BJ (cell line): ENCODE measurements at regions of chr20 and their contacts with region 1.

Region 1: GRCh38 chr20:15236812-15237211 is 899.4 kb upstream of the FLRT3 start:
- DNase-seq: no peak
- H3K4me3 ChIP-seq: no peak overlapping the region
- H3K27me3 ChIP-seq: no peaks in the 10 kb centered on the region
- CTCF ChIP-seq: peak; percentile 67

Region 2: GRCh38 chr20:14337400-14338171 is 899.2 kb before region 1 on chr20 and contains the start of gene FLRT3:
- CTCF ChIA-PET with region 1: interaction called, 12 read pairs
- POLR2A ChIA-PET with region 1: no interaction called
- DNase-seq: peak; percentile 80
- H3K4me3 ChIP-seq: peak within 1 kb of the TSS; percentile 62
- H3K27me3 ChIP-seq: no peaks in the 10 kb centered on the region
- CTCF ChIP-seq: peak; percentile 81
- polyA plus RNA-seq, gene FLRT3: 0.64 and 1.4 TPM in 2 replicates

Region 3: DNA sequence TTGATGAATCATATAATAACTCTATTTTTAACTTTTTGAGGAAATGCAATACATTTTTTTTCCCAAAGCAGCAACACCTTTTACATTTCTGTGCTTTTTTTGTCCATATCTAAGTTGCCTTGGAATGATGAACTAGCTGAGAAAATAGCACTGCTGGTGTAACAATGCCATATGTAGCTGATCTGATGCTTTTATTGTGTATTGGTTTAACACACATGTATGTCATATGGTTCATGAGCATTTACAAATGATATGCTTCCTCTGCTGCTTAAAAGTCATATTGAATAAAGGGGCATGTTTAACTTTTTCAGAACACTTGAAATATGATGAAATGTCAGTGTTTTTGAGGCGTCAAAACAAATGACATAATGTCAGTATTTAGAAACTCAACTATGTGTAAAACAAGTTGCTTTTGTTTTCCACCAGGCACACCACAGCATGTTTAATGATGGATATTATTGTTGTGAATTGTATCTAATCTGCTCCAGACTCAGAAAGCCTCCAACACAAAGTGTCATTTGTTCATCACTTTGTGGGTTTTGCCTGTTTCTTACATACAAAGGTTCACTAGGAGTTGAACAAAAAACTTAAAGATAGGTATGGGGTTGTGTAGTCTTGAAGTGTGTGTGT is 123.6 kb before region 1 on chr20:
- CTCF ChIA-PET with region 1: no interaction called
- POLR2A ChIA-PET with region 1: no interaction called
- DNase-seq: no peak
- H3K4me3 ChIP-seq: no peak overlapping the region
- H3K27me3 ChIP-seq: no peaks in the 10 kb centered on the region
- CTCF ChIP-seq: no peak

Region 4: GRCh38 chr20:15297059-15297875 is 60.5 kb after region 1 on chr20:
- CTCF ChIA-PET with region 1: no interaction called
- POLR2A ChIA-PET with region 1: interaction called, 11 read pairs
- DNase-seq: no peak
- H3K4me3 ChIP-seq: no peak overlapping the region
- H3K27me3 ChIP-seq: no peaks in the 10 kb centered on the region
- CTCF ChIP-seq: no peak